Caco-2 (cell line): ENCODE measurements at regions of chr2 and their contacts with region 1.

Region 1: DNA sequence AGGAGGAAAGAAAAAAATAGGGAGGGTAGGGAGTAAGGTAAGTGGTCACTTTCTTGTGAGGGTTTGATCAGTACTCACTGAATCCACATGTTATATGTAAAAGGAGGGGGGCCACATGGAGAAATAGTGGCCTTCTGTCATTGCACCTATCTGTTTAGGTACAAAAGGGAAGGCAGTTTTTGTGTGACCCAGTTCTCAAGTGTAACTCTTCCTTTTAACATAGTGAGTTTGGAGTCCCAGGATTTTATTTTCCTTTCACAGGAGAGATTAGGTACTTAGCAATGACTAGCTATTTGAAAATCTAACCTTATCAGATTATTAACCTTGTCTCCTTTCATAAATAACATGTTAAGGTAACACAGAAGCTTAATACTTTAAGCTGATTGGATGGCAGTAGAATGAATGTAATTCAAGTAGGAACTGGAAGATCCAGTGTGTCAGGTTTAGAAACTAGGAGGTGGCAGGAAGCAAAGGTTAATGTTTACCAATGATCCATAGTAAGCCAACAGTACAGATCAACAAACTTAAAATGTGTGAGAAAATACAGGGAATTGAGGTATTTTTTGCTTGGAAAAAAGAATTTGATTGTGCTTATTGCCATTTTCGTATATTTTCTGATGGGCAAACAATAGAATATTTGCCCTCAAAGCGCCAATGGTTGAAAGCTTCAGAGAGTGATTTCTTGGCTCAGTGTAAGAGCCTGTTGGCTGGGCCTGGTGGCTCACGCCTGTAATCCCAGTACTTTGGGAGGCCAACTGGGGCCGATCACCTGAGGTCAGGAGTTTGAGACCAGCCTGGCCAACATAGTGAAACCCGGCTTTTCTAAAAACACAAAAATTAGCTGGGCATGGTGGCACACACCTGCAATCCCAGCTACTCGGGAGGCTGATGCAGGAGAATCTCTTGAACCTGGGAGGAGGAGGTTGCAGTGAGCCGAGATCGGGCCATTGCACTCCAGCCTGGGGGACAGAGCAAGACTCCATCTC is 11.3 kb downstream of the HNMT start:
- DNase-seq: peak in 1 of 2 experiments; percentile 76
- H3K4me3 ChIP-seq: no peak overlapping the region
- H3K4me3 Mint-ChIP-seq: peak overlapping the region; percentile 25
- H3K27ac Mint-ChIP-seq: peak overlapping the region; percentile 57
- H3K4me1 ChIP-seq: peaks cover 49% of the 10 kb centered on the region
- H3K4me1 Mint-ChIP-seq: peaks cover 27% of the 10 kb centered on the region
- H3K27me3 ChIP-seq: no peaks in the 10 kb centered on the region
- H3K27me3 Mint-ChIP-seq: no peaks in the 10 kb centered on the region
- CTCF ChIP-seq: no peak

Region 2: GRCh38 chr2:137928547-137929518 is 46.7 kb before region 1 on chr2:
- CTCF ChIA-PET with region 1: no interaction called
- POLR2A ChIA-PET with region 1: no interaction called
- intact Hi-C with region 1: loop called (anchors 1 kb)
- DNase-seq: peak; percentile 49 to 71
- H3K4me3 ChIP-seq: no peak overlapping the region
- H3K4me3 Mint-ChIP-seq: peak overlapping the region; percentile 37
- H3K27ac Mint-ChIP-seq: peak overlapping the region; percentile 91
- H3K4me1 ChIP-seq: peaks cover 21% of the 10 kb centered on the region
- H3K4me1 Mint-ChIP-seq: peaks cover 20% of the 10 kb centered on the region
- H3K27me3 ChIP-seq: no peaks in the 10 kb centered on the region
- H3K27me3 Mint-ChIP-seq: no peaks in the 10 kb centered on the region
- CTCF ChIP-seq: no peak

Region 3: DNA sequence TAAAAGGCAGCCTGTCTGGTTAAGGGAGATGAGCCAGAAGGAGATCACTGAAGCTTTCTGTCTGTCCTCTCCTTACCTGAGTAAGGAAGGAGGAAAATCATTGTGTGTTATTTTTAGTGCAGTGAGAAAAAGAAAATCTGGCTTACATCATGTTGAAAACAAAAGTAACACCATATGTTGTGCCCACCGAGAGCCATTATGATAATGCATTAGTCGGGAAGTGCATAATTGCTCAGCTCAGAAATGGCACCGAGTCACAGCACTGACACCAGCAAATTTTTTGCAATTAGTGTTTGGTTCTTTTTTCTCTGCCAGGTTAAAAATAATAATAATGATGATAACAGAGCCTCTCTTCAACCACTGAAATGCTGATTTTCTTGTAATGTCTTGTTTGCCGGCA is 35.3 kb after region 1 on chr2:
- CTCF ChIA-PET with region 1: no interaction called
- POLR2A ChIA-PET with region 1: no interaction called
- intact Hi-C with region 1: no loop called
- DNase-seq: no peak
- H3K4me3 ChIP-seq: no peak overlapping the region
- H3K4me3 Mint-ChIP-seq: no peak overlapping the region
- H3K27ac Mint-ChIP-seq: no peak overlapping the region
- H3K4me1 ChIP-seq: no peaks in the 10 kb centered on the region
- H3K4me1 Mint-ChIP-seq: no peaks in the 10 kb centered on the region
- H3K27me3 ChIP-seq: no peaks in the 10 kb centered on the region
- H3K27me3 Mint-ChIP-seq: no peaks in the 10 kb centered on the region
- CTCF ChIP-seq: no peak

Region 4: GRCh38 chr2:138030459-138030858 is 54.9 kb after region 1 on chr2:
- CTCF ChIA-PET with region 1: no interaction called
- POLR2A ChIA-PET with region 1: no interaction called
- intact Hi-C with region 1: no loop called
- DNase-seq: no peak
- H3K4me3 ChIP-seq: no peak overlapping the region
- H3K4me3 Mint-ChIP-seq: no peak overlapping the region
- H3K27ac Mint-ChIP-seq: no peak overlapping the region
- H3K4me1 ChIP-seq: peaks cover 21% of the 10 kb centered on the region
- H3K4me1 Mint-ChIP-seq: peaks cover 23% of the 10 kb centered on the region
- H3K27me3 ChIP-seq: no peaks in the 10 kb centered on the region
- H3K27me3 Mint-ChIP-seq: no peaks in the 10 kb centered on the region
- CTCF ChIP-seq: no peak